Panc1 (cell line): ENCODE measurements at regions of chr10 and their contacts with region 1.

Region 1: DNA sequence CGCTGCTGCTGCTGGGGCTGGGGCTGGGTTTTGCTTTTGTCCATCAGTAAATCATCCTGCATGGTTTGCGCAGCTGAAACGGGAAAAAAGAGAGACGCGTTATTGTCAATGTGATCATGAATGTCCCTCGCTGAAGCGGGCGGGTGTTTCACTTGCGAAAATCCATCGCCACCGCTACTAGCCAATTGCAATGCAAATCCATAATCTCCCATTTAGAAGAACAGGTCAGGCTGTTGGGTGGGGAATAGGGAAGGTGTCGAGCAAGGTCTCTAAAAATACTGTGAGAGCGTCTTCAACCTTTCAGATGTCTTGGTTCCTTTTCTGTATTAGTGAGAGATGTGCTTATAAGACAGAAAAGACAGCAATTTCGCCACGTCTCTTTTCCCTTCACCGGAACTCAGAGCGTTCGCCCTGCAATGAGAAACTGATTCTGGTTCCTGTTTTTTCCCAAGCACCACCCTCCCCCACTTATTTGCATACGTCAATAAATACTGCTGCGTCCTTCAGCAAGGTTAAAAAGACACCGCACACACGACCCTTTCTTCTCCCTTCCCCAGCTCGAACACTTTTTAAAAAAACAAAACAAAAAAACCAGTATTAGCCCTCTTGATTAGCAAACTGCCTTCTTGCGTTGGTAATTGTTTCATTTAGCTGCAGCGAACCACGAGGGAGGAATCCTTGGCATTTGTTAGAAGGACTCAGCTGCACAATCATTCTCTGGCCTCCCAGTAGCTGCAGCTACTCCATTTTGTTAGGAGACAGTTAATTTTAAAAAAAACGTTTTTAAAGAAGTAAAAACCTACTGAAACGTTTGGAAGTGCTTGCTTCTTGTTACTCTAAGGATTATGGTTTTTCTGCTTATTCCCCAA is 50.4 kb downstream of the CPEB3 start:
- DNase-seq: peak; percentile 47
- ATAC-seq: peak; percentile 85
- H3K4me3 ChIP-seq: peak overlapping the region; percentile 70 to 75
- H3K27ac ChIP-seq: peak overlapping the region; percentile 76
- H3K4me1 ChIP-seq: peaks cover 17% of the 10 kb centered on the region
- H3K27me3 ChIP-seq: no peaks in the 10 kb centered on the region
- CTCF ChIP-seq: no peak

Region 2: GRCh38 chr10:92222603-92223275 is 17.8 kb before region 1 on chr10:
- CTCF ChIA-PET with region 1: interaction called, 3 read pairs
- POLR2A ChIA-PET with region 1: interaction called, 11 read pairs
- in situ Hi-C with region 1: no loop called
- intact Hi-C with region 1: no loop called
- DNase-seq: peak; percentile 22
- ATAC-seq: no peak
- H3K4me3 ChIP-seq: no peak overlapping the region
- H3K27ac ChIP-seq: no peak overlapping the region
- H3K4me1 ChIP-seq: no peaks in the 10 kb centered on the region
- H3K27me3 ChIP-seq: no peaks in the 10 kb centered on the region
- CTCF ChIP-seq: no peak

Region 3: GRCh38 chr10:92265687-92266258 is 25.2 kb after region 1 on chr10:
- CTCF ChIA-PET with region 1: no interaction called
- POLR2A ChIA-PET with region 1: no interaction called
- in situ Hi-C with region 1: no loop called
- intact Hi-C with region 1: no loop called
- DNase-seq: no peak
- ATAC-seq: no peak
- H3K4me3 ChIP-seq: no peak overlapping the region
- H3K27ac ChIP-seq: no peak overlapping the region
- H3K4me1 ChIP-seq: no peaks in the 10 kb centered on the region
- H3K27me3 ChIP-seq: no peaks in the 10 kb centered on the region
- CTCF ChIP-seq: no peak